Thyroid gland (tissue), 4 donors: ENCODE measurements at regions of chr11 and their contacts with region 1.

Region 1: GRCh38 chr11:120303004-120303637 is 22.0 kb upstream of the TLCD5 start:
- DNase-seq: peak; percentile 53 to 66
- H3K4me3 ChIP-seq: no peak overlapping the region
- H3K27ac ChIP-seq: peak overlapping the region; percentile 63 to 68 (median 64)
- H3K4me1 ChIP-seq: peaks cover 6 to 16% of the 10 kb centered on the region in 2 donors
- H3K27me3 ChIP-seq: no peaks in the 10 kb centered on the region
- CTCF ChIP-seq: peak; percentile 50 to 77 (median 62)
- POLR2A ChIP-seq: no peak

Region 2: GRCh38 chr11:120128782-120129172 is 174.3 kb before region 1 on chr11:
- intact Hi-C with region 1: no loop called
- DNase-seq: no peak
- H3K4me3 ChIP-seq: no peak overlapping the region
- H3K27ac ChIP-seq: no peak overlapping the region
- H3K4me1 ChIP-seq: peaks cover 0 to 3% of the 10 kb centered on the region in 2 donors
- H3K27me3 ChIP-seq: no peaks in the 10 kb centered on the region
- CTCF ChIP-seq: no peak
- POLR2A ChIP-seq: no peak

Region 3: GRCh38 chr11:120172054-120172911 is 130.8 kb before region 1 on chr11:
- intact Hi-C with region 1: loop called (anchors 5 kb)
- DNase-seq: peak; percentile 56 to 68
- H3K4me3 ChIP-seq: no peak overlapping the region
- H3K27ac ChIP-seq: no peak overlapping the region
- H3K4me1 ChIP-seq: peaks cover 0 to 13% of the 10 kb centered on the region in 2 donors
- H3K27me3 ChIP-seq: no peaks in the 10 kb centered on the region
- CTCF ChIP-seq: peak; percentile 58 to 83 (median 73)
- POLR2A ChIP-seq: no peak

Region 4: GRCh38 chr11:120235024-120235861 is 67.9 kb before region 1 on chr11:
- intact Hi-C with region 1: loop called (anchors 2 kb)
- DNase-seq: peak; percentile 88
- H3K4me3 ChIP-seq: no peak overlapping the region
- H3K27ac ChIP-seq: no peak overlapping the region
- H3K4me1 ChIP-seq: peaks cover 2 to 8% of the 10 kb centered on the region in 2 donors
- H3K27me3 ChIP-seq: no peaks in the 10 kb centered on the region
- CTCF ChIP-seq: peak; percentile 71 to 93 (median 88)
- POLR2A ChIP-seq: no peak

Region 5: DNA sequence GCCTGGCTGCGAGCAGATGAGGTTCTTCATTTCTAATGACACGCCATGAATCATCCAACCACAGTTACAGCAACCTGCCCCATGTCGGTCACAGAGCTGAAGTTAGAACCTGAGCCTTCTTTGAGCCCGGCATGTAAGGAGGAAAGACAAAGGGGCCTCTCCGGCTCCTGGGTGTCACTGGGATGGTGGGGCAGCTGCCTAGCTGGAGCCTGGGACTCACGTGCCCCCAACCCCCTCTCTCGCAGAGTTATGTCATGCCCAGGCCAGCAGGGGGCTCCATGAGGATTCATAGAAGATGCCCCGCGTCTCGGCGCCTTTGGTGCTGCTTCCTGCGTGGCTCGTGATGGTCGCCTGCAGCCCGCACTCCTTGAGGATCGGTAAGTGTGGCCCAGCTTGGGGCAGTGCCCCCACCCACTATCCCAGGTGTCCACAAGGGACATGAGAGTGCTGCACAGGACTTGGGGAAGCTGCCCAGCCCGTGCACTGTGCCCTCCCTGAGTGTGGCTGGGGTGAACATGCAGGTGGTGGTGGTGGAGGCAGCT is 357.0 kb after region 1 on chr11:
- intact Hi-C with region 1: no loop called
- DNase-seq: peak in 1 of 2 donors; percentile 14
- H3K4me3 ChIP-seq: no peak overlapping the region
- H3K27ac ChIP-seq: no peak overlapping the region
- H3K4me1 ChIP-seq: no peaks in the 10 kb centered on the region
- H3K27me3 ChIP-seq: no peaks in the 10 kb centered on the region
- CTCF ChIP-seq: peak in 3 of 6 experiments; percentile 3 to 24 (median 13)
- POLR2A ChIP-seq: no peak